B cell (primary cell): ENCODE measurements at regions of chr10 and their contacts with region 1.

Region 1: DNA sequence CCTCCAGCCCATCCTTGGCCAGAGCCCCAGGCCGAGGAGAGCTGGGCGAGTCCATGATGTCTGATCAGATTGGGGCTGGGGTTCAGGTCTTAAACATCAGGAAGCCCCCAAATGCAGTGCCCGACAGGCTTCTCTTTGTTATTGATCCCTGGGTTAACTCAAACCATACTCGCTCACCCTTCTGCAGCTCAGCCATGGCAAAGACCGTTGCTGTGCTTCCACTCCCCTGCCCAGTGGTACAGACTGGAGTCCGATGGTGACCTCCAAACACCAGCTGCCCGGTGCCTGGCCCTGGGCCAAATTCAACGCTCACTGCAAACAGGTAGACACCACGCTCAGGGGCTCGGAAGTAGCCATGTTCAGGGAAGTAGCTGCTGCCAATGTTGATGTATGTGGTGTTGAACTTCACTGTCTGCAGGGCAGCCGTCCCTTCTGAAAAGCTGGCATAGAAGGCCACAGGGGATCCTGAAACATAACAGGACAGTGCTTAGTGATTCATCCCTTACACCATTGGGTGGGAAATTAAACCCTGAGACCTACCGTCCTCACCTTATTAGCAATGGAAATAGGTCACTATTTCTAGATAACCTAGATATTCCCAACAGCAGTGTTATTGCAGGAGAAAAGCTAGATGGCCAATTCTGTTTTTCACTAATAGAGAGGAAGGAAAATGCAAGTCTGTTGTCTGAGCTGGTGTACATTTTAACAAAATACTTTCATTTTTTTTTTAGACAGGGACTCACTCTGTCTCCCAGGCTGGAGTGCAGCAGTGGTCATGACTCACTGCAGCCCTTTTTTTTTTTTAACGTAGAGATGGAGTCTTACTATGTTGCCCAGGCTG is 20.5 kb downstream of the MMRN2 start:
- DNase-seq: no peak
- ATAC-seq: no peak
- H3K4me3 ChIP-seq: no peak overlapping the region
- H3K4me3 Mint-ChIP-seq: no peak overlapping the region
- H3K27ac ChIP-seq: no peak overlapping the region
- H3K27ac Mint-ChIP-seq: no peak overlapping the region
- H3K4me1 ChIP-seq: peaks cover 0 to 4% of the 10 kb centered on the region in 2 donors
- H3K4me1 Mint-ChIP-seq: no peaks in the 10 kb centered on the region
- H3K27me3 ChIP-seq: no peaks in the 10 kb centered on the region
- H3K27me3 Mint-ChIP-seq: no peaks in the 10 kb centered on the region
- CTCF ChIP-seq: no peak

Region 2: DNA sequence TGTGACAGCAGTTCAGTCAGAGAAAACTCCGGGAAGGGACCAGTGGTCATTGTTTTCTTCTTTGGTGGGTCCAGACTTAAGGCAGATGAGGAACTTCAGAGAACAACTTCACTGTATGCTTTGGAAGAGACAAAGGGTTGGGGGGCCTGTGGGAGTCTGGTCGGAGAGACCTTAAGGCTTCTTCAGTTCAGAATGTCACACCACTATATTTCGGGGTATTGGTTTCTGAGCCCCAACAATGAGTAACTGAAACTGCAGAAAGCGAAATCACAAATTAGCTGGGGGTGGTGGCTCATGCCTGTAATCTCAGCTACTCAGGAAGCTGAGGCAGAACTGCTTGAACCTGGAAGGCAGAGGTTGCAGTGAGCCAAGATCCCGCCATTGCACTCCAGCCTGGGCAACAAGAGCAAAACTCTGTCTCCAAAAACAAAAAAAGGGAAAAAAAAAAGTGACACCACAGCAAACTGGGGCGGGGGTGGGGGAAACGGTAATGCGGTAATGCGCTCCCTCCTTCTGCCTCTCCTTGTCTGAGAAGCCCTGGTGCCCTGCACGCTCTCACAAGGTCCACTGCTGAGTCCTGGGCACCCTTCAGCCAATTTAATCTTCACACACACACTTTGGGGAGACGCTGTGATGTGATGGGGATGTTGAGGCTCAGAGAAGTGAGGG is 29.2 kb after region 1 on chr10:
- CTCF ChIA-PET with region 1: interaction called, 19 read pairs
- POLR2A ChIA-PET with region 1: no interaction called
- intact Hi-C with region 1: loop called (anchors 1 kb)
- DNase-seq: no peak
- ATAC-seq: no peak
- H3K4me3 ChIP-seq: peak overlapping the region in 2 of 5 experiments; percentile 23 to 33
- H3K4me3 Mint-ChIP-seq: peak overlapping the region; percentile 75
- H3K27ac ChIP-seq: no peak overlapping the region
- H3K27ac Mint-ChIP-seq: peak overlapping the region; percentile 50
- H3K4me1 ChIP-seq: peaks cover 24 to 50% of the 10 kb centered on the region in 2 donors
- H3K4me1 Mint-ChIP-seq: peaks cover 32% of the 10 kb centered on the region
- H3K27me3 ChIP-seq: peaks cover 0 to 33% (median 15%) of the 10 kb centered on the region in 4 experiments
- H3K27me3 Mint-ChIP-seq: peaks cover 7% of the 10 kb centered on the region
- CTCF ChIP-seq: no peak

Region 3: GRCh38 chr10:87079106-87079836 is 142.4 kb after region 1 on chr10:
- CTCF ChIA-PET with region 1: no interaction called
- POLR2A ChIA-PET with region 1: no interaction called
- intact Hi-C with region 1: no loop called
- DNase-seq: no peak
- ATAC-seq: no peak
- H3K4me3 ChIP-seq: no peak overlapping the region
- H3K4me3 Mint-ChIP-seq: no peak overlapping the region
- H3K27ac ChIP-seq: no peak overlapping the region
- H3K27ac Mint-ChIP-seq: no peak overlapping the region
- H3K4me1 ChIP-seq: peaks cover 6 to 8% of the 10 kb centered on the region in 2 donors
- H3K4me1 Mint-ChIP-seq: peaks cover 21% of the 10 kb centered on the region
- H3K27me3 ChIP-seq: no peaks in the 10 kb centered on the region
- H3K27me3 Mint-ChIP-seq: no peaks in the 10 kb centered on the region
- CTCF ChIP-seq: no peak

Region 4: GRCh38 chr10:87094373-87095235 is 157.7 kb after region 1 on chr10 and contains the starts of genes GLUD1 and SHLD2:
- CTCF ChIA-PET with region 1: no interaction called
- POLR2A ChIA-PET with region 1: no interaction called
- intact Hi-C with region 1: loop called (anchors 1 kb)
- DNase-seq: peak; percentile 92
- ATAC-seq: peak; percentile 73
- H3K4me3 ChIP-seq: peak within 1 kb of the TSS; percentile 59 to 79 (median 78)
- H3K4me3 Mint-ChIP-seq: peak within 1 kb of the TSS; percentile 96
- H3K27ac ChIP-seq: peak within 1 kb of the TSS; percentile 86 to 93
- H3K27ac Mint-ChIP-seq: peak within 1 kb of the TSS; percentile 95
- H3K4me1 ChIP-seq: peaks cover 26 to 32% of the 10 kb centered on the region in 2 donors
- H3K4me1 Mint-ChIP-seq: peaks cover 51% of the 10 kb centered on the region
- H3K27me3 ChIP-seq: no peaks in the 10 kb centered on the region
- H3K27me3 Mint-ChIP-seq: no peaks in the 10 kb centered on the region
- CTCF ChIP-seq: no peak
- total RNA-seq, gene GLUD1: 71.5 and 81.0 TPM in 2 replicates
- total RNA-seq, gene SHLD2: 22.0 and 22.3 TPM in 2 replicates

Region 5: DNA sequence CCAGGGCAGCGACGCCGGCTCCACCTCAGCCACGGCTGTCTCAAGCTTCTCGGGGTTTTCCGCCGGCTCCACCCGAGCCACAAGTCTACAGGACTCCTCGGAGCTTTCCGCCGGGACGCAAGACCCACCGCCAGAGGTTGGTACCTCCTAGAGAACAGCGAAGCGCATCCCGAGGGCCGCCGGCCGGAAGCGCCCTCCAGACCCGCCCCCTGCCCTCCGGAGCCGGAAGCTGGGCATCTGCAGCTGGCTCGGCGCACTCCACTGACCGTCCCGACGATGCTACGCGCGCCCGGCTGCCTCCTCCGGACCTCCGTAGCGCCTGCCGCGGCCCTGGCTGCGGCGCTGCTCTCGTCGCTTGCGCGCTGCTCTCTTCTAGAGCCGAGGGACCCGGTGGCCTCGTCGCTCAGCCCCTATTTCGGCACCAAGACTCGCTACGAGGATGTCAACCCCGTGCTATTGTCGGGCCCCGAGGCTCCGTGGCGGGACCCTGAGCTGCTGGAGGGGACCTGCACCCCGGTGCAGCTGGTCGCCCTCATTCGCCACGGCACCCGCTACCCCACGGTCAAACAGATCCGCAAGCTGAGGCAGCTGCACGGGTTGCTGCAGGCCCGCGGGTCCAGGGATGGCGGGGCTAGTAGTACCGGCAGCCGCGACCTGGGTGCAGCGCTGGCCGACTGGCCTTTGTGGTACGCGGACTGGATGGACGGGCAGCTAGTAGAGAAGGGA is 567.9 kb after region 1 on chr10 and contains the start of gene MINPP1:
- CTCF ChIA-PET with region 1: no interaction called
- POLR2A ChIA-PET with region 1: no interaction called
- intact Hi-C with region 1: loop called (anchors 10 kb)
- DNase-seq: peak; percentile 69
- ATAC-seq: peak; percentile 83
- H3K4me3 ChIP-seq: peak within 1 kb of the TSS; percentile 54 to 92 (median 84)
- H3K4me3 Mint-ChIP-seq: peak within 1 kb of the TSS; percentile 90
- H3K27ac ChIP-seq: peak within 1 kb of the TSS; percentile 8 to 64
- H3K27ac Mint-ChIP-seq: peak within 1 kb of the TSS; percentile 59
- H3K4me1 ChIP-seq: peaks cover 14 to 15% of the 10 kb centered on the region in 2 donors
- H3K4me1 Mint-ChIP-seq: peaks cover 17% of the 10 kb centered on the region
- H3K27me3 ChIP-seq: peaks cover 0 to 4% (median 0%) of the 10 kb centered on the region in 4 experiments
- H3K27me3 Mint-ChIP-seq: peaks cover 13% of the 10 kb centered on the region
- CTCF ChIP-seq: no peak
- total RNA-seq, gene MINPP1: 7.5 and 9.4 TPM in 2 replicates